Colonic mucosa (tissue), 4 donors: ENCODE measurements at regions of chr2 and their contacts with region 1.

Region 1: GRCh38 chr2:172465417-172466334 is 38.3 kb downstream of the ITGA6 start:
- DNase-seq: peak; percentile 86
- H3K4me3 ChIP-seq: no peak overlapping the region
- H3K27ac ChIP-seq: peak overlapping the region; percentile 86
- H3K4me1 ChIP-seq: peaks cover 20% of the 10 kb centered on the region
- H3K27me3 ChIP-seq: no peaks in the 10 kb centered on the region
- CTCF ChIP-seq: peak; percentile 72

Region 2: DNA sequence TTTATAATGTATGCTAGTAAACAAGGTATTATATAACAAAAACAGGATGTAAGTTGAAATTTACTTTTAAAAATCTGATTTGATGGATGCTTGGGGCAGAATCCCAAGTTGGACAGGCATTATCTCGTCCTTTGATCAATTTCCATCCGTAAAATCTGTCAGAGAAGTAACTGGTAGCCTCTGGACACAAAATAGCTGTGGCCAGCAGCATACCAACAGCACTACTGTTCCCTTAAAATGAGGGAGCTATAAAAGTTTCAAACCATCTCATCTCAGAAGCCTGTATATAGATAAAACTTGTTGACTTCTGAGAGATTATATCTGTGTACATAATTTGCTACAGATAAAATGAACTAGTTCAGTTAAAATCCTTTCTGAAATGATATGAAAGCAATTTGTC is 480.6 kb before region 1 on chr2:
- intact Hi-C with region 1: no loop called
- DNase-seq: no peak
- H3K4me3 ChIP-seq: no peak overlapping the region
- H3K27ac ChIP-seq: no peak overlapping the region
- H3K4me1 ChIP-seq: no peaks in the 10 kb centered on the region
- H3K27me3 ChIP-seq: no peaks in the 10 kb centered on the region
- CTCF ChIP-seq: no peak

Region 3: GRCh38 chr2:172172513-172173173 is 293.0 kb before region 1 on chr2:
- intact Hi-C with region 1: loop called (anchors 2 kb)
- DNase-seq: peak; percentile 83
- H3K4me3 ChIP-seq: peak overlapping the region; percentile 61
- H3K27ac ChIP-seq: peak overlapping the region; percentile 76
- H3K4me1 ChIP-seq: peaks cover 4% of the 10 kb centered on the region
- H3K27me3 ChIP-seq: no peaks in the 10 kb centered on the region
- CTCF ChIP-seq: peak; percentile 81

Region 4: DNA sequence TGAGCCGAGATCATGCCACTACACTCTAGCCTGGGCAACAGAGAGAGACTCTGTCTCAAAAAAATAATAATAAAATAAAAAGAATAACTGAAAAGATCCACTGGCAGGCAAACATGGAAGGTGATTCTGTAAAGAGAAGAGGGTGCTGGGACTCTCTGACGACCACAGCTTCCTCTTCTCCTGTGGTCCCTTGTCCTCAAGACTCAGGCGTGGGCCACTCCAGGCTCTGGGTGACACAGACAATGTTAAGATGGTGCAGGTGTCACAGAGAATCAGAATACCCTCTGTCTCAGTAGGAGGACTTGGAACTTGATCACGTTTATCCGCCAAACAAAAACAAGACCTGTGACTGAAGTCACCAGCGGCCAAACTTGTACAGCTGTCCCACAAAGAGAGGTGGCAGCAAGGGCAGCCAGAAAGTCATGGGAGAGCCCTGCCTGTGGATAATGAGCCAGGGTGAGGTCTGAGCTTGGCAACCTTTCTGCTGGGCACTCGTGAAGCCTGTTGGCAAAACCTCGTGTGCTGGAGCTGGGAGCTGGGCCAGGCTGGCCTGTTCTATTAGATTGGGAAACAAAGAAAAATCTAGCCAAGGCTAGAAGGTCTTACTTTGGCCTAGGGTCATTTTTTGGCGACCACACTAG is 114.7 kb before region 1 on chr2:
- intact Hi-C with region 1: loop called (anchors 10 kb)
- DNase-seq: no peak
- H3K4me3 ChIP-seq: no peak overlapping the region
- H3K27ac ChIP-seq: no peak overlapping the region
- H3K4me1 ChIP-seq: no peaks in the 10 kb centered on the region
- H3K27me3 ChIP-seq: no peaks in the 10 kb centered on the region
- CTCF ChIP-seq: no peak

Region 5: DNA sequence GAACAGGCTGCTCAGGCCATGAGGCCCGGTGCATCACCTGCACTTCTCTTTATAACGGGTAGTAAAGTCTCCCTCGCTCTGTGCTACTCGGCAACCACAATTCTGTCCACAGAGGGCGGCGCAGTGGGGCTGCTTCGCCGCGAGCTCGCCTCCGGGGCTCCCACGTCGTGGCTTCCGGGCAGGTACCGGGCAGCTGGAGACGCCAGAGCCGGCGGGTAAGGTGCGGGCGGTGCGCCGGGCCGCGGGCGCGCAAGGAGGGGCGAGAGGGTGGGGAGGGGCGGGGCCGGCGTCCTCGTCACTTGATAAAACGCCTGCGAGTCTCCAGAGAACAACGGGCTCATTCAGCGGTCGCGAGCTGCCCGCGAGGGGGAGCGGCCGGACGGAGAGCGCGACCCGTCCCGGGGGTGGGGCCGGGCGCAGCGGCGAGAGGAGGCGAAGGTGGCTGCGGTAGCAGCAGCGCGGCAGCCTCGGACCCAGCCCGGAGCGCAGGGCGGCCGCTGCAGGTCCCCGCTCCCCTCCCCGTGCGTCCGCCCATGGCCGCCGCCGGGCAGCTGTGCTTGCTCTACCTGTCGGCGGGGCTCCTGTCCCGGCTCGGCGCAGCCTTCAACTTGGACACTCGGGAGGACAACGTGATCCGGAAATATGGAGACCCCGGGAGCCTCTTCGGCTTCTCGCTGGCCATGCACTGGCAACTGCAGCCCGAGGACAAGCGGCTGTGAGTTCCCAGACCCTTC is 38.3 kb before region 1 on chr2 and contains the start of gene ITGA6:
- intact Hi-C with region 1: loop called (anchors 5 kb)
- DNase-seq: peak; percentile 92
- H3K4me3 ChIP-seq: peak within 1 kb of the TSS; percentile 86
- H3K27ac ChIP-seq: peak within 1 kb of the TSS; percentile 97
- H3K4me1 ChIP-seq: peaks cover 5% of the 10 kb centered on the region
- H3K27me3 ChIP-seq: no peaks in the 10 kb centered on the region
- CTCF ChIP-seq: no peak
- total RNA-seq, gene ITGA6: 174 to 186 TPM